Endothelial cell of umbilical vein (primary cell): ENCODE measurements at regions of chr1 and their contacts with region 1.

Region 1: GRCh38 chr1:58652651-58653184 is 47.1 kb downstream of the MYSM1 start:
- DNase-seq: peak; percentile 89
- H3K4me3 ChIP-seq: no peak overlapping the region
- H3K27ac ChIP-seq: no peak overlapping the region
- H3K4me1 ChIP-seq: no peaks in the 10 kb centered on the region
- H3K27me3 ChIP-seq: no peaks in the 10 kb centered on the region
- CTCF ChIP-seq: peak; percentile 64 to 82
- POLR2A ChIP-seq: no peak

Region 2: DNA sequence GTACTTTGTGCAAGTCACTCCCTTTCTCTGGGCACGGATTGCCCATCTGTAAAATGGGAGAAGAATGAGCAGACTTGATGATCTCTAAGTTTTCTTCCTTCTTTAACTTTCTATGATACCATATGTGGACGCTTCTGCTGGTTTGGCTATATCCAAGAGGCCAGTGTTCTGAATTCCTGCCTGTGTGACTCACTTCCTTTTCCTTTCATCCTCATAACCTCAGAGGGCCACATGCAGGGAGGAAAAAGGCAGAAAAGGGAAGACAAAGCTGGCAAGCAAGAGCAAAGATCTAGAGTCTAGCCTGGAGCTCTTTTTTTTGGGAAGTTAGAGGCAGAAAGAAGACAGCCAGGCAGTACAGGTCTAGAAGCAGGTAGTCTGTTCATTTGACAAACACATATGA is 257.4 kb before region 1 on chr1:
- CTCF ChIA-PET with region 1: no interaction called
- POLR2A ChIA-PET with region 1: no interaction called
- dilution Hi-C with region 1: no loop called
- intact Hi-C with region 1: loop called (anchors 5 kb)
- DNase-seq: peak; percentile 78
- H3K4me3 ChIP-seq: no peak overlapping the region
- H3K27ac ChIP-seq: peak overlapping the region; percentile 84
- H3K4me1 ChIP-seq: peaks cover 25% of the 10 kb centered on the region
- H3K27me3 ChIP-seq: no peaks in the 10 kb centered on the region
- CTCF ChIP-seq: no peak
- POLR2A ChIP-seq: no peak

Region 3: GRCh38 chr1:58539553-58539952 is 113.2 kb before region 1 on chr1:
- CTCF ChIA-PET with region 1: interaction called, 13 read pairs
- POLR2A ChIA-PET with region 1: no interaction called
- dilution Hi-C with region 1: no loop called
- intact Hi-C with region 1: no loop called
- DNase-seq: no peak
- H3K4me3 ChIP-seq: no peak overlapping the region
- H3K27ac ChIP-seq: no peak overlapping the region
- H3K4me1 ChIP-seq: no peaks in the 10 kb centered on the region
- H3K27me3 ChIP-seq: no peaks in the 10 kb centered on the region
- CTCF ChIP-seq: no peak
- POLR2A ChIP-seq: no peak

Region 4: GRCh38 chr1:58573705-58574591 is 78.8 kb before region 1 on chr1:
- CTCF ChIA-PET with region 1: interaction called, 27 read pairs
- POLR2A ChIA-PET with region 1: no interaction called
- dilution Hi-C with region 1: no loop called
- intact Hi-C with region 1: loop called (anchors 1 kb)
- DNase-seq: peak; percentile 68
- H3K4me3 ChIP-seq: no peak overlapping the region
- H3K27ac ChIP-seq: no peak overlapping the region
- H3K4me1 ChIP-seq: peaks cover 22% of the 10 kb centered on the region
- H3K27me3 ChIP-seq: no peaks in the 10 kb centered on the region
- CTCF ChIP-seq: no peak
- POLR2A ChIP-seq: no peak

Region 5: GRCh38 chr1:58618303-58618702 is 34.4 kb before region 1 on chr1:
- CTCF ChIA-PET with region 1: interaction called, 23 read pairs
- POLR2A ChIA-PET with region 1: no interaction called
- dilution Hi-C with region 1: no loop called
- intact Hi-C with region 1: no loop called
- DNase-seq: peak; percentile 96
- H3K4me3 ChIP-seq: no peak overlapping the region
- H3K27ac ChIP-seq: peak overlapping the region; percentile 77
- H3K4me1 ChIP-seq: peaks cover 32% of the 10 kb centered on the region
- H3K27me3 ChIP-seq: no peaks in the 10 kb centered on the region
- CTCF ChIP-seq: no peak
- POLR2A ChIP-seq: no peak

Region 6: GRCh38 chr1:59759156-59759925 is 1106.6 kb after region 1 on chr1:
- CTCF ChIA-PET with region 1: interaction called, 10 read pairs
- POLR2A ChIA-PET with region 1: no interaction called
- dilution Hi-C with region 1: no loop called
- intact Hi-C with region 1: loop called (anchors 1 kb)
- DNase-seq: peak; percentile 85
- H3K4me3 ChIP-seq: no peak overlapping the region
- H3K27ac ChIP-seq: peak overlapping the region; percentile 44
- H3K4me1 ChIP-seq: peaks cover 5% of the 10 kb centered on the region
- H3K27me3 ChIP-seq: no peaks in the 10 kb centered on the region
- CTCF ChIP-seq: peak; percentile 86 to 92
- POLR2A ChIP-seq: no peak